ENCODE measurements at regions of chr10 and their contacts with region 1.

Region 1: GRCh38 chr10:99973190-99973589 is 36.6 kb downstream of the DNMBP start:
- DNase-seq: no peak
- H3K4me3 ChIP-seq: no peak overlapping the region
- H3K27ac ChIP-seq: no peak overlapping the region
- H3K4me1 ChIP-seq: peaks cover 4% of the 10 kb centered on the region
- H3K27me3 ChIP-seq: no peaks in the 10 kb centered on the region
- CTCF ChIP-seq: peak; percentile 13

Region 2: DNA sequence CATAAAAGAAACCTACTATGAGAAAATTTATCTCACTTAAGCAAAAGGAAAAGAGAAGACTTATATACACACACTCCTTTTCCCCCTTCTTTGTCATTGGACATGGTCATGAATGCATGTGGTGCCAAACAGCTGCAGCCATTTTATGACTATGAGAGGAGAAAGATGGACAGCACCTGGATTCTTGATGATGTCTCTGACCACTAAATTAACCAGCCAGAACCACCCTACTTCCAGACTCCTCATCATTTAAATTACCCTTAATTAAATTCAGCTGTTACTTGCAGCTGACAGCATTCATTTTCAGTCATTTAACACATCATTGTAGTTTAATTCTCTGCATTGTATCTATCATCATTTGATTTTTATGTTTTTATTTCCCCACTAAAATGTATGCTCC is 1147.4 kb before region 1 on chr10:
- intact Hi-C with region 1: no loop called
- DNase-seq: no peak
- H3K4me3 ChIP-seq: no peak overlapping the region
- H3K27ac ChIP-seq: no peak overlapping the region
- H3K4me1 ChIP-seq: no peaks in the 10 kb centered on the region
- H3K27me3 ChIP-seq: no peaks in the 10 kb centered on the region
- CTCF ChIP-seq: no peak

Region 3: DNA sequence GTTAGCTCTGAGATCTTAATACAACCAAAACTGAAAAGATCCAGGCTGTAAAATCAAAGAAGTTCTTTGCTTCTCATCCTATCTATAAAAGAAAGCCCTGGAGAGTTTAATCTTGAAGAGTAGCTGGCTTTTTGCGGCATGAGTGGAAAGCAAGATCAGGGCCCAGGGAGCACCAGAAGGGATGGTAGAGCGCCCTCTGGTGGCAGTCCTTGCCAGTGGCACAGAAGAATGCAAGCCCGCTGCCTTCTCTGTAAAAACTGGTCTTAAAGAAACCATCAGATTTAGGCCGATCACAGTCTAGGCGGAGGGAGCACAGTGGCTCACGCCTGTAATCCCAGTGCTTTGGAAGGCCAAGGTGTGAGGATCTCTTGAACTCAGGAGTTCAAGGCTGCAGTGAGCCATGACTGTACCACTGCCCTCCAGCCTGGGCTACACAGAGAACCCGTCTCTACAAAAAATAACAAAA is 72.9 kb after region 1 on chr10:
- intact Hi-C with region 1: loop called (anchors 5 kb)
- DNase-seq: peak; percentile 92
- H3K4me3 ChIP-seq: no peak overlapping the region
- H3K27ac ChIP-seq: no peak overlapping the region
- H3K4me1 ChIP-seq: no peaks in the 10 kb centered on the region
- H3K27me3 ChIP-seq: no peaks in the 10 kb centered on the region
- CTCF ChIP-seq: peak; percentile 94

Measured in colonic mucosa (tissue), 4 donors.